ENCODE measurements at regions of chr5 and their contacts with region 1.

Region 1: DNA sequence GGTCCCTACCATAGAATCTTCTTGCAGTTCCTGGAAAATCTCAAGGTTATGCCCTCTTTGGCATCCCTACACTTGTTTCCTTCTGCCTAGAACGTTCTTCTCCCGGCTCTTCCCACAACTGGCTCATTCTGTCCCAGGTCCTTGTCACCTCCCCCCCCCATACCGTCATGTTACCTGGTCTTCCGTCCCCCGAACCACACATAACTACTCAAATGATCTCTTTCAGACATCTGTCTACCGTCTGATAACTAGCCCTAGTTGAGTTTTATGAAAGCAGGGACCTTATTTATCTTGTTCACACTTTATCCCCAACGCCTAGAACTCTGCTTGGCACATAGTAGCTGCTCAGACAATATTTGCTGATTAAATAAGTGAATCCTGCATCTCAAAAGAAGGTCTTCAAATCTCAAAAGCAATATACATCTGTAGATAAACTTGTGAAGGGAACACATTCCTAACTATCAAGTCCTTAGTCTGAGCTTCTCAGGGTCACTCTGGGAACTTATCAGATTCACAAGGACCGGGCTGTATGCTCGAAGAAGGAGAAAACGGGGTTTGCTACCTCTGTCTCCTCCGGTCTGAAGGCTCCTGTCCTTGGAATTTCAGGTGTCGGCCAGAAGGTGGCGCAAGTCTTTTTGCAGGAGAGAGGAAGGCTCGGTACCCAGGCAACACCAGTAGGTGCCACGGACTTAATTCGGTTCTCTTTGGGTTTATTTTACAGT is 30.0 kb downstream of the LCP2 start:
- DNase-seq: peak; percentile 91
- ATAC-seq: peak; percentile 50
- H3K4me3 Mint-ChIP-seq: peak overlapping the region; percentile 34
- H3K27ac Mint-ChIP-seq: peak overlapping the region; percentile 86
- H3K4me1 Mint-ChIP-seq: peaks cover 93% of the 10 kb centered on the region
- H3K27me3 Mint-ChIP-seq: no peaks in the 10 kb centered on the region

Region 2: DNA sequence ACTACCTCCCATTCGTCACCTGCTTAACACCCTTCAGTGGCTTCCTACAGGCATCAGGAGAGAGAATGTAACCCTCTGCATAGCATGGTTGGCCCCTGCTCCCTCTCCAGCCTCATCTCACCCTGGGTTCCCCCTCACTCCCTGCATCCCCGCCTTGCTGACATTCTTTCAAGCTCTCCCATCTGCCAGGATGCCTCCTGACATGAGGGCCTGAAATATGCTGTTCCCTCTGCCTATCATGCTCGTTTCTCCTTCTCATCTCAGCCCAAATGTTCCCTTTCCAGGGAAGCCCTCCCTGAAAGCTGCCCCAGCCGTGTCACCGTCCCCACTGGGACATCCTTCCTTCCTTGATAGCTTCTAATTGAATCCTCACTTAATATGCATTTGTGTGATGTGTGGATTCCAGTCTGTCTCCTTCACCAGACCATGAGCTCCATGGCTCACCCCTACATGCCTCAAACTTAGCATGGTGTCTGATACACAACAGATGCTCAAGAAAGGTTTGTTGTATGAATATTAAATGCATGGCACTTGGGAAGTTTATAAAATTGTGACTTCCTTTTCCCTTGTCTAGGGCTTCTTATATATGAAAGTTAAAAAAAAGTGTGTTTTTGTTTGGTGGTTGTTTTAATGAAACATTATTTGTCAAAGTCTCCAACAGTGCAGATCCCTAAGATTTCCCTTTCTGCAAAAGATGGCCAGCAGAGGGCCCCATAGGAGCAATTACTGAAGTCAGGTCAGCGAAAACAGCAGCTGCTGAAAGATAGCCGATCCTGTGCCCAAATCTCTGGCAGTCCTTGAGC is 42.1 kb before region 1 on chr5:
- CTCF ChIA-PET with region 1: interaction called, 23 read pairs
- POLR2A ChIA-PET with region 1: no interaction called
- intact Hi-C with region 1: loop called (anchors 2 to 10 kb)
- DNase-seq: peak; percentile 87
- ATAC-seq: peak; percentile 64
- H3K4me3 Mint-ChIP-seq: no peak overlapping the region
- H3K27ac Mint-ChIP-seq: no peak overlapping the region
- H3K4me1 Mint-ChIP-seq: peaks cover 3% of the 10 kb centered on the region
- H3K27me3 Mint-ChIP-seq: no peaks in the 10 kb centered on the region

Region 3: GRCh38 chr5:170247363-170247762 is 20.2 kb before region 1 on chr5:
- CTCF ChIA-PET with region 1: interaction called, 14 read pairs
- POLR2A ChIA-PET with region 1: no interaction called
- intact Hi-C with region 1: no loop called
- DNase-seq: no peak
- ATAC-seq: no peak
- H3K4me3 Mint-ChIP-seq: no peak overlapping the region
- H3K27ac Mint-ChIP-seq: no peak overlapping the region
- H3K4me1 Mint-ChIP-seq: peaks cover 23% of the 10 kb centered on the region
- H3K27me3 Mint-ChIP-seq: no peaks in the 10 kb centered on the region

Region 4: GRCh38 chr5:170293273-170293672 is 25.7 kb after region 1 on chr5:
- CTCF ChIA-PET with region 1: interaction called, 180 read pairs
- POLR2A ChIA-PET with region 1: interaction called, 6 read pairs
- intact Hi-C with region 1: no loop called
- DNase-seq: peak; percentile 70
- ATAC-seq: peak; percentile 16
- H3K4me3 Mint-ChIP-seq: peak overlapping the region; percentile 88
- H3K27ac Mint-ChIP-seq: peak overlapping the region; percentile 97
- H3K4me1 Mint-ChIP-seq: peaks cover 72% of the 10 kb centered on the region
- H3K27me3 Mint-ChIP-seq: no peaks in the 10 kb centered on the region

Region 5: GRCh38 chr5:170312666-170313065 is 45.1 kb after region 1 on chr5:
- CTCF ChIA-PET with region 1: interaction called, 10 read pairs
- POLR2A ChIA-PET with region 1: interaction called, 4 read pairs
- intact Hi-C with region 1: no loop called
- DNase-seq: peak; percentile 84
- ATAC-seq: peak; percentile 91
- H3K4me3 Mint-ChIP-seq: peak overlapping the region; percentile 80
- H3K27ac Mint-ChIP-seq: peak overlapping the region; percentile 98
- H3K4me1 Mint-ChIP-seq: peaks cover 67% of the 10 kb centered on the region
- H3K27me3 Mint-ChIP-seq: no peaks in the 10 kb centered on the region

Measured in activated CD4-positive, alpha-beta T cell treated with anti-CD3 and anti-CD28 coated beads for 36 hours (primary cell).